ENCODE measurements at regions of chr1 and their contacts with region 1.

Region 1: GRCh38 chr1:31422505-31423319 is 9.7 kb downstream of the SERINC2 start:
- DNase-seq: peak; percentile 12 to 68 (median 41)
- ATAC-seq: peak; percentile 83
- H3K4me3 ChIP-seq: no peak overlapping the region
- H3K4me3 Mint-ChIP-seq: no peak overlapping the region
- H3K27ac ChIP-seq: no peak overlapping the region
- H3K27ac Mint-ChIP-seq: peak overlapping the region in 1 of 9 donors; percentile 53
- H3K4me1 ChIP-seq: no peaks in the 10 kb centered on the region
- H3K4me1 Mint-ChIP-seq: peaks cover 0 to 5% (median 2%) of the 10 kb centered on the region in 7 donors
- H3K27me3 ChIP-seq: no peaks in the 10 kb centered on the region
- H3K27me3 Mint-ChIP-seq: peaks cover 18 to 40% (median 25%) of the 10 kb centered on the region in 5 donors

Region 2: DNA sequence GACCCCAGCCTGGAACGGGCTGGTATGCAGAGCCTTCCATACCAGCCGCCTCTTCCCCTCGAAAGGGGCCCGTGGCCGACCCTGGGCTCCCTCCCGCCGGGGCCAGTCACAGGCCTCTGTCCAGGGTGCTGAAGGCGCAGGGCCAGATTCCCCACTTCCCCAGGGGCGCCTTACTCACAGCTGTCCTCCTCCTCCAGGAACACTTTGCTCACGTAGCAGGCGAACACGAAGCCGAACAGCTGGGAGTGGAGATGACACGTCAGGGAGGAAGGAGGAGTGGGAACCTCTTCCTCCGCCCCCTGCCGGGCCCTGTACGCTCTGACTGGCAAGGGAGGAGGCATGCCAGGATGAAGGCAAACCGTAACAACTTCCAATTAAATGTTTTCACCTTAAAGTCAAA is 240.4 kb before region 1 on chr1:
- CTCF ChIA-PET with region 1: no interaction called
- POLR2A ChIA-PET with region 1: no interaction called
- intact Hi-C with region 1: loop called in 1 of 2 experiments (anchors 1 kb)
- DNase-seq: peak in 8 of 9 donors; percentile 21 to 72 (median 32)
- ATAC-seq: peak; percentile 72
- H3K4me3 ChIP-seq: no peak overlapping the region
- H3K4me3 Mint-ChIP-seq: peak overlapping the region in 4 of 10 donors; percentile 17 to 40 (median 28)
- H3K27ac ChIP-seq: no peak overlapping the region
- H3K27ac Mint-ChIP-seq: no peak overlapping the region
- H3K4me1 ChIP-seq: no peaks in the 10 kb centered on the region
- H3K4me1 Mint-ChIP-seq: peaks cover 0 to 10% (median 8%) of the 10 kb centered on the region in 7 donors
- H3K27me3 ChIP-seq: peaks cover 3 to 8% of the 10 kb centered on the region in 2 donors
- H3K27me3 Mint-ChIP-seq: peaks cover 33 to 55% (median 50%) of the 10 kb centered on the region in 5 donors

Region 3: GRCh38 chr1:31394628-31395193 is 28.0 kb before region 1 on chr1:
- CTCF ChIA-PET with region 1: interaction called, 8 read pairs
- POLR2A ChIA-PET with region 1: no interaction called
- intact Hi-C with region 1: loop called (anchors 1 kb)
- DNase-seq: peak; percentile 48 to 83 (median 65)
- ATAC-seq: peak; percentile 96
- H3K4me3 ChIP-seq: peak overlapping the region; percentile 75
- H3K4me3 Mint-ChIP-seq: peak overlapping the region; percentile 84 to 90 (median 88)
- H3K27ac ChIP-seq: no peak overlapping the region
- H3K27ac Mint-ChIP-seq: peak overlapping the region in 4 of 9 donors; percentile 18 to 75 (median 52)
- H3K4me1 ChIP-seq: peaks cover 0 to 4% of the 10 kb centered on the region in 2 donors
- H3K4me1 Mint-ChIP-seq: peaks cover 0 to 14% (median 12%) of the 10 kb centered on the region in 7 donors
- H3K27me3 ChIP-seq: no peaks in the 10 kb centered on the region
- H3K27me3 Mint-ChIP-seq: peaks cover 0 to 8% (median 0%) of the 10 kb centered on the region in 5 donors

Measured in naive thymus-derived CD4-positive, alpha-beta T cell (primary cell).